ENCODE measurements at regions of chrX and their contacts with region 1.

Region 1: DNA sequence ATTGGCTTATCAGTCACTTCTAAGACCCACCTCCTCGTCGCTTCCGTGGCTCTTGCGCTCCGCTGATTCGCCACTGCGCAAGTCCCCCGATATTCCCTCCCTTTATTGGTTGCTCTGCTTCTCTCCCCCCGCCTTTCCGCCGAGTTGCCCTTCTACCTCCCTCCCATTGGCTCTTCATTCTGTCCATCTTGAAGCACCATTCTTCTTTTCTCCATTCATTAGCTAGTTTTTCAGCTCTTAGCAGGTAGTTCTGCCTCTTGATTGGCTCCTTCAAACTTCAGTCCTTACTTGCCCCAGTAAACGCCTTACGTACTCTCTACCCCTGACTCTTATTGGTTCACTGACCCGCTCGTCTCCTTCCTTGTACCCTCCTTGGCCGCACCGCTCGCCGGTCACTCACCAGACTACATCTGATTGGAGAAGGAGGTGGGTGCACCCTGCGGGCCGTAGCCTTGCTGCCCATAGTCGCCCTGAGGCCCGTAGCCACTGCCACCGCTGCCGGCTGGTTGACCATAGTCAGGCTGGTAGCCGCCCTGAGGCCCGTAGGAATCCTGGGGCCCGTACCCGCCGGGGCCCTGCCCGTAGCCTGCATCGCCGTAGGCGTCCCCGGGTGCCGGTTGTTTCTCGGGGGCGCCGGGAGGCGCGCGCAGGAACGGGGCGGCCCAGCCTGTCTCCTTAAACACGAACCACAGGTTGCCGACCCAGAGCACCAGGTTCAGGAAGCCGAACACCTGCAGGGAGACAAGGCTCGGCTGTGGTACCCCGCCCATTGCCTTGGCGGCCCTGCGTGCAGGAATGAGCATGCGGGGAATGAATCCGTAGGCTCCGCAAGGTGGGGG is 5.1 kb upstream of the PRICKLE3 start:
- DNase-seq: peak; percentile 99
- ATAC-seq: peak; percentile 88
- H3K4me3 ChIP-seq: peak overlapping the region; percentile 71
- H3K27ac ChIP-seq: peak overlapping the region; percentile 85
- H3K4me1 ChIP-seq: peaks cover 14 to 35% of the 10 kb centered on the region in 2 experiments
- H3K27me3 ChIP-seq: no peaks in the 10 kb centered on the region
- CTCF ChIP-seq: no peak
- POLR2A ChIP-seq: peak; percentile 70
- RAD21 ChIP-seq: no peak

Region 2: DNA sequence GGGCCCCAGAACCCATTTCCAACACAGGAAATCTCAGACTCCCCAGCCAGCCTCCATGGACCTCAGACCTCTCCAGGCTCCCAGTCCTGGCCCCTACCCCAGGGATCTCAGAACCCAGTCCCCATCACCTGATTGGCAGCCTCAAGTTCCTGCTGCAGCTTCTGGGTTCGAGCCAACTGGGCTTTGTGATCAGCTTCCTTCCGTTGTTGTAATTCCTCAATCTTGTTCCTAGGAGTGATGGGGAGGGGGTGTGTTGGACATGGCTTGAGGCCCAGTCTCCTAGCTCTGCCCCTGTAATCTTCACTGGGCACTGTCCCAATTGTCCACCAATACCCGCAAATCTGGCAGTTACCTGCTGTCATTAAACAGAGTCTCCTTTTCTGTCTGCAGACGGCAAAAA is 201.8 kb before region 1 on chrX:
- CTCF ChIA-PET with region 1: no interaction called
- POLR2A ChIA-PET with region 1: no interaction called
- RAD21 ChIA-PET with region 1: no interaction called
- intact Hi-C with region 1: no loop called
- DNase-seq: no peak
- ATAC-seq: no peak
- H3K4me3 ChIP-seq: no peak overlapping the region
- H3K27ac ChIP-seq: no peak overlapping the region
- H3K4me1 ChIP-seq: no peaks in the 10 kb centered on the region
- H3K27me3 ChIP-seq: no peaks in the 10 kb centered on the region
- CTCF ChIP-seq: no peak
- POLR2A ChIP-seq: no peak
- RAD21 ChIP-seq: no peak

Region 3: DNA sequence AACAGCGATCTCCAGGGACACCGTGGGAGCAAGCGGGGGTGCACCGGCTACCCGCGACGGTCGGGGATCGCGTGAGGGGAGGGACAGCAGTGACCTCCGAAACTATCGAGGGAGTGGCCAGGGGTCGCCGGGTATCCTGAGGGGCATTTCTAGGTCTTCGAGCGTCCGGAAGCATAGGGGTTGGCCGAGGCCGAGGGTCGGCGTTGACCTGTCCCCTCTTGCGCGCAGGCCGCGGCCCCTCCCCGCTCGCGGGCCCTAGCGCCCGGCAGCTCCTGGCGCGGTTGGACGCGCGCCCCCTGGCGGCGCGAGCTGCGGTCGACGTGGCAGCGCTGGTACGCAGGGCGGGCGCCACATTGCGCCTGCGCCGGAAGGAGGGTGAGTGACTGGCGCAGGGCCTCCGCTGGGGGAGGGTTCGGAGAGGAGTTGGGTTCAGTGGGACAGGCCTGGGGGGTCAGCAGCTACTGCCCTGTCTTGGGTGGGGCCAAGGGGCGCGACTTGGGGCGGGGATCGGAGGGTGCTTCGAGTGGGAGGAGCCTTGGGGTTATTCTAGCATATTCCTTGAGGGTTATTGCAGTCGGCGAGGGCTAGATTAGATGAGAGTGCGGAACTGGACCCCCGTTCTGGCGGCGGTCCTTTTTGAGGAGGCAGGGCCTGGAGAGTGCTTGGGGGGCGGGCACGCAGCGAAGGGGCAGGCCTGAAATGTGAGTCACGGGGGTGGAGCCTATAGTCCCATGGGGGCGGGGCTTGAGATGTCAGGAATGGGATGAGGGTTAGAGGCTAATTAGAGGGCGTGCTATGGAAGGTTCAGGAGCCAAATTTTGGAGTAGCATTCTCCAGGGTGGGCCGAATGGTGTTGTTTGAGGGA is 27.5 kb before region 1 on chrX:
- CTCF ChIA-PET with region 1: interaction called, 5 read pairs
- POLR2A ChIA-PET with region 1: interaction called, 21 read pairs
- RAD21 ChIA-PET with region 1: no interaction called
- intact Hi-C with region 1: no loop called
- DNase-seq: peak; percentile 63
- ATAC-seq: peak; percentile 75
- H3K4me3 ChIP-seq: peak overlapping the region; percentile 32 to 45
- H3K27ac ChIP-seq: peak overlapping the region; percentile 95
- H3K4me1 ChIP-seq: peaks cover 14 to 57% of the 10 kb centered on the region in 2 experiments
- H3K27me3 ChIP-seq: no peaks in the 10 kb centered on the region
- CTCF ChIP-seq: peak in 2 of 3 experiments; percentile 54 to 55; a peak in 4 of 6 replicates
- POLR2A ChIP-seq: peak; percentile 23
- RAD21 ChIP-seq: no peak

Region 4: DNA sequence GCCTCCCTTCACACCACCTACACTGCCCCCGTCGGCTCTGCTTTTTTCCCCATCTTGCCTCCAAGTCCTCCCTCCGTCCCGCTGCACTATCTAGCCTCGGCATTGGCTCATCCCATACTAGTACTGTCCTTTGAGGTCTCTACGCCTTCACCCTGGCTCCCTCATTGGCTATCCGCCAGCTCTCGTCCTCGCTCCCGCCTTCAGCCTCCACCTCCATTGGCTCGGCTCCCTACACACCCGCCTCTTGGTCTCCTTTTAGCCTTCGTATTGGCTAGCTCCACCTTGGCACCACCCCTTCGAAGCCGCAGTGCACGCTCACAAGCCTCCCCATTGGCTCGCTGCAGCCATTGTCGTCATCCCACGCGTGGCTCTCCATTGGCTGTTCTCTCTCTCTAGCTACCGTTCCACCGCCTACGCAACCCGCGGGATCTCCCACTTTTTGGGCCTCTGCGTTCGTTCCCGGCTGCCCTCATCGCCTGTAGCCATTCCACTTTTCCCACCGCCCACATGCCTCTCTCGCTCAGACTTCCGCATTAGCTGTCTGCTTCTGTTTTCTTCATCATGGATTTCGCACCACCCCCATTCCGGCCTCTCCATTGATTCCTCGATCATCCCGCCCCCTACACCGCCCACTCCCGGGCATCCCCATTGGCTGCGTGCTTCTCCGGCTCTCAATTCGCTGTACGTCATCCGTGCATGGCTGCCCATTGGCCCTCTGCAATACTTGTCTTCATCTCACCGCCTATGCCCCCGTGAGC is 77.9 kb after region 1 on chrX:
- CTCF ChIA-PET with region 1: interaction called, 4 read pairs
- POLR2A ChIA-PET with region 1: interaction called, 12 read pairs
- RAD21 ChIA-PET with region 1: no interaction called
- intact Hi-C with region 1: loop called (anchors 2 kb)
- DNase-seq: peak; percentile 96
- ATAC-seq: peak; percentile 89
- H3K4me3 ChIP-seq: peak overlapping the region; percentile 61 to 66
- H3K27ac ChIP-seq: peak overlapping the region; percentile 74
- H3K4me1 ChIP-seq: peaks cover 8 to 24% of the 10 kb centered on the region in 2 experiments
- H3K27me3 ChIP-seq: no peaks in the 10 kb centered on the region
- CTCF ChIP-seq: no peak
- POLR2A ChIP-seq: no peak
- RAD21 ChIP-seq: no peak

Region 5: DNA sequence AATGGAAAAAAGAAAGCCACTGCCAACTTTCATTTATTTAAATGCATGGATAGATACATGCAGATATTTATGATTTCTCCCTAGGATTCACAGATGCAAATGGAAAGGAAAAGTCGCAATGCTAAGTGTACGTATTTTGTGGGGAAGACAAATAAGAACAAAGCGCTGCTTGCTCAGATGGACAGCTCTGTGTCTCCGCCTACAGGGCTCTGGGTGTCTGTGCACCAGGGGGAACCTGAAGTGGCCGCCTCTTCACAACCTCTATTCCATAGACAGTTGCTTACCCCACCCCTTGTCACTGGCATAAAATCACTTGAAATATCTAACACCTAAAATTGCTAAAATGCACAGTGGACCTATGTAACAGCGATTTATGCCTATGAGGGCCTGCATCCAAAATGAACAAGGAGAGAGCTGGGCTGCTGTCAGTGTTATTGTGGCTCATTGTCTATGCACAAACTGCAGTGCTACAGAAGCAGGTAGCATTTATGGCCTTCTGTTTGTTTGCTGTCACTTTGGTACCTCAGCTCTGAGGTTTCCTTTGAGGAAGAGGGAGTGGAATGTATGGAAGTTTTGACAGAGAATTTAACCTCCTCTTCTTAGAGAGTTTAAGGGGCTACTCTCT is 563.1 kb after region 1 on chrX:
- CTCF ChIA-PET with region 1: interaction called, 3 read pairs
- POLR2A ChIA-PET with region 1: no interaction called
- RAD21 ChIA-PET with region 1: no interaction called
- intact Hi-C with region 1: loop called (anchors 5 kb)
- DNase-seq: peak; percentile 10
- ATAC-seq: peak; percentile 85
- H3K4me3 ChIP-seq: no peak overlapping the region
- H3K27ac ChIP-seq: no peak overlapping the region
- H3K4me1 ChIP-seq: no peaks in the 10 kb centered on the region
- H3K27me3 ChIP-seq: peaks cover 50% of the 10 kb centered on the region
- CTCF ChIP-seq: peak; percentile 37 to 73 (median 62); a peak in 5 of 6 replicates
- POLR2A ChIP-seq: no peak
- RAD21 ChIP-seq: peak; percentile 64; the same call in 1 of the 2 replicates

Region 6: GRCh38 chrX:49840679-49841078 is 649.4 kb after region 1 on chrX:
- CTCF ChIA-PET with region 1: interaction called, 3 read pairs
- POLR2A ChIA-PET with region 1: no interaction called
- RAD21 ChIA-PET with region 1: no interaction called
- intact Hi-C with region 1: loop called (anchors 10 kb)
- DNase-seq: peak; percentile 57
- ATAC-seq: peak; percentile 82
- H3K4me3 ChIP-seq: no peak overlapping the region
- H3K27ac ChIP-seq: no peak overlapping the region
- H3K4me1 ChIP-seq: no peaks in the 10 kb centered on the region
- H3K27me3 ChIP-seq: no peaks in the 10 kb centered on the region
- CTCF ChIP-seq: peak; percentile 53 to 73 (median 58); a peak in 5 of 6 replicates
- POLR2A ChIP-seq: no peak
- RAD21 ChIP-seq: peak; percentile 54